HEK293T (cell line): ENCODE measurements at regions of chr4 and their contacts with region 1.

Region 1: GRCh38 chr4:30835044-30835443 is 114.9 kb downstream of the PCDH7 start:
- DNase-seq: no peak

Region 2: GRCh38 chr4:30726090-30726675 is 108.9 kb before region 1 on chr4:
- CTCF ChIA-PET with region 1: interaction called, 12 read pairs
- POLR2A ChIA-PET with region 1: no interaction called
- DNase-seq: no peak

Region 3: DNA sequence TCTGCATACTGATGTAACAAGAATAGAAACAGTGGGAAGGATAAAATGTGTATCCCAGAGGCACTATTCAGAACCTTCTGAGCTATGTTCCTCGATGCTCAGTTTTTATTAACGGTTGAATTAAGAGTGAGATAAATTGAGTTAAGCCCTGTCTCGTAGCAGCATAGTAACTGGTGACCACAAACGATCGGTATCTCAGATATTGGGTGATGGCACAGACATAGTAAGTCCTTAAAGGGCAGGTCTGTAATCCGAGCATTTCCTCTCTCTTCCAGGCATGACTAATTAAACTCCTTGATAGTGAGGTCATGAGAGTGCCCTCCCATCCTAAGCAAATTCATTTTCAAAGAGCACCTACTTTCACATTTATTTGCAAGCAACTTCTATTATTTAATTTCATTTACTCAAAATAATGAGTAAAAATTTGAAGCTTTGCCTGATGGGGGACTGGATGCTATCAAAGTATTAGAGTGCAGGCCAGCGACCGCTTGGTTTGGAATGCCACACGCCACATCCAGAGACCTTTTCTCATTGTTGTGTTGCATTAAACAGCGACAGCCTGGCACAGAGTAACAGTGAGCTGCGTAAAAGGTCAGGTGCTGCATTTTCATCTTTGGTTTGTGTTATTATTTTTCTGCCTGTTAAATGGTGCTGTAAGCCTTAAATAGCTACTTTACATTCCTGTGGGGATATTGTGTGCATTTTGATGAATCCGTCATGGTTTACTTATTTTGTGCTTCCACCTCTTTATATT is 13.0 kb before region 1 on chr4:
- CTCF ChIA-PET with region 1: no interaction called
- POLR2A ChIA-PET with region 1: no interaction called
- DNase-seq: peak; percentile 13

Region 4: GRCh38 chr4:31100536-31100935 is 265.5 kb after region 1 on chr4:
- CTCF ChIA-PET with region 1: no interaction called
- POLR2A ChIA-PET with region 1: no interaction called
- DNase-seq: no peak

Region 5: GRCh38 chr4:31160146-31160545 is 325.1 kb after region 1 on chr4:
- CTCF ChIA-PET with region 1: interaction called, 10 read pairs
- POLR2A ChIA-PET with region 1: no interaction called
- DNase-seq: no peak